GM13976 (cell line): ENCODE measurements at regions of chr2 and their contacts with region 1.

Region 1: GRCh38 chr2:213021971-213022899 is 129.2 kb downstream of the IKZF2 start:
- DNase-seq: peak; percentile 28
- CTCF ChIP-seq: no peak

Region 2: GRCh38 chr2:213199864-213200263 is 177.6 kb after region 1 on chr2:
- in situ Hi-C with region 1: no loop called
- DNase-seq: no peak
- CTCF ChIP-seq: no peak

Region 3: GRCh38 chr2:213232649-213233437 is 210.6 kb after region 1 on chr2:
- in situ Hi-C with region 1: loop called (anchors 5 kb)
- DNase-seq: peak; percentile 16
- CTCF ChIP-seq: no peak